Testis (tissue), 5 donors: ENCODE measurements at regions of chr14 and their contacts with region 1.

Region 1: DNA sequence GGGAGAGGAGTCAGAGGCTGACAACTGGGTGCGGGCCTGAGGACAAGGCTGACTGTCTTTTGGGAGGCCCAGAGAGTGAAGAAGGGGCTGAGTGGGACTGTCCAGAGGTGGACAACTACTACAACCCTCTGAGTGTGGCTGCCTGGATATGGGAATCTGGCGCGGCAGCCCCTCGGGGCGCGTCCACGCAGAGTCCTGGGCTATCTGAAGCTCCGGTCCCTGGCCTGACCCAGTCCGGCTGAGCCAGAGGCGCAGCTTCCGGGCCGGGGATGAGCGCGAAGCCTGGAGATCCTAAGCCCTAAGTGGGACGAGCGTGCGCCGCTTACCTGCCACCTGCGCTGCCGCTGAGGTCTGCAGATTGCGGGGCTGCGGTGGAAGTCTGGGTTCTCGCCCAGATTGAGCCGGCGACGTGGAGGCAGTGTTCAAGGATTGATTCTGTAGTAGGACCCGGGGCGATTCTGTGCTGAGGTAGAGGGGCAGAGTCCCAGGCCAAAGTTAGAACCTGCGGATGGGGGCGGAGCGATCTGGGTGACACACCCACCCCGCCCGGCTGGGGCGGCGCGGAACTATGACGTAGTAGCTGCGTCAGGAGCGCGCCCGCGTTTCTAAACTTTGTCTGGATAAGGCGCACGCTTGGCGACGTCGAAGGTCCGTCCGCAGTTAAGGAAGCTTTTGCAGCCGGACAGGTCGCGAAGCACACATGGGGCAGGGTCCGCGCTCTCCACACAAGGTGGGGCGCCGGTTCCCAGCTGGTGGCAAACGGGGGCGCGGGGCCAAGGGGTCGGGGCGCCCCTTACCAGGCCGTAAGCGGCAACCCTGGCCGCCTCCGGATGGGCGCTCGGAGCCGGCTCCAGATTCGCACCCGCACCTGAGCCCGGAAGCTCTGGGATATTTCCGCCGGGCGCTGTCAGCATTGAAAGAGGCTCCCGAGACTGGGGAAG is at the starts of genes DHRS1 and NOP9:
- DNase-seq: peak; percentile 95
- H3K4me3 ChIP-seq: peak within 1 kb of the TSS; percentile 73 to 89
- H3K27ac ChIP-seq: peak within 1 kb of the TSS; percentile 65 to 82
- H3K4me1 ChIP-seq: peaks cover 9% of the 10 kb centered on the region
- H3K27me3 ChIP-seq: no peaks in the 10 kb centered on the region
- CTCF ChIP-seq: peak in 1 of 3 experiments; percentile 25
- POLR2A ChIP-seq: no peak
- total RNA-seq, gene DHRS1: 22.5 to 24.6 TPM
- total RNA-seq, gene NOP9: 25.0 to 27.6 TPM

Region 2: DNA sequence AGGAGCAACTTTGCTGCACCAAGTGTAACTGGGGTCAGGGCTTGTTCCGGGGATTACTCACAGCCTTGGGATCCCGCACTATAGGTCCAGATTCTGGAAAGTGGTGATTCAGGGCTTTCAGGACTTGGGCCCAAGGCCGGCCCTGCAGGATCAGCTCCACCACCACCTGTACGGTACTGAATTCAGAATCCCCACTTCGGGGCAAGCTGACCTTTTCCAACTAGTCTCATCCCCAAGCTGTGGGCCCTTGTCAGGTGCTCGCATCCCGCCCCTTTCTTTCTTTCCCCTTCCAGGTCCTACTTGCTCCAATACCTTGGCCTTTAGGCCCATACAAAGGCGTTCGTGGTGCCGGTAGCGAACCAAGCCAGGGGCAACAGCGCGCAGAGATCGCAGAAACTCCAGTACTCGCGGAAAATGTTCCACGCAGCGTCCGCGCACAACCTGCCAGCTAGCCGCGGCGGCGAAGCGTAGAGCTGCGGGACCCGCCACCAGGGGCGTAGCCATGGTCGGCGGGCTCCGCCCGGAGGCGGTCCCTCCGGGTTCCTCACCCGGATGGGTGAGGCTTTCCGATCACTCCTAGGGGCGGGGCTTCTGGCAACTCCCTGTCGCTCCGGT is 57.6 kb before region 1 on chr14:
- intact Hi-C with region 1: loop called (anchors 5 kb)
- DNase-seq: peak; percentile 93
- H3K4me3 ChIP-seq: peak overlapping the region; percentile 72
- H3K27ac ChIP-seq: peak overlapping the region; percentile 94 to 97
- H3K4me1 ChIP-seq: peaks cover 18% of the 10 kb centered on the region
- H3K27me3 ChIP-seq: no peaks in the 10 kb centered on the region
- CTCF ChIP-seq: peak; percentile 58 to 66 (median 65)
- POLR2A ChIP-seq: no peak